ENCODE measurements at regions of chr14 and their contacts with region 1.

Region 1: GRCh38 chr14:21014761-21015190 is 10.1 kb downstream of the NDRG2 start:
- DNase-seq: peak; percentile 92
- ATAC-seq: peak; percentile 91
- H3K4me3 Mint-ChIP-seq: no peak overlapping the region
- H3K27ac Mint-ChIP-seq: no peak overlapping the region
- H3K4me1 Mint-ChIP-seq: peaks cover 12% of the 10 kb centered on the region
- H3K27me3 Mint-ChIP-seq: peaks cover 3% of the 10 kb centered on the region
- CTCF ChIP-seq: peak; percentile 84

Region 2: GRCh38 chr14:20922474-20922873 is 92.3 kb before region 1 on chr14:
- CTCF ChIA-PET with region 1: no interaction called
- POLR2A ChIA-PET with region 1: no interaction called
- DNase-seq: no peak
- ATAC-seq: no peak
- H3K4me3 Mint-ChIP-seq: no peak overlapping the region
- H3K27ac Mint-ChIP-seq: no peak overlapping the region
- H3K4me1 Mint-ChIP-seq: no peaks in the 10 kb centered on the region
- H3K27me3 Mint-ChIP-seq: peaks cover 34% of the 10 kb centered on the region
- CTCF ChIP-seq: no peak

Region 3: DNA sequence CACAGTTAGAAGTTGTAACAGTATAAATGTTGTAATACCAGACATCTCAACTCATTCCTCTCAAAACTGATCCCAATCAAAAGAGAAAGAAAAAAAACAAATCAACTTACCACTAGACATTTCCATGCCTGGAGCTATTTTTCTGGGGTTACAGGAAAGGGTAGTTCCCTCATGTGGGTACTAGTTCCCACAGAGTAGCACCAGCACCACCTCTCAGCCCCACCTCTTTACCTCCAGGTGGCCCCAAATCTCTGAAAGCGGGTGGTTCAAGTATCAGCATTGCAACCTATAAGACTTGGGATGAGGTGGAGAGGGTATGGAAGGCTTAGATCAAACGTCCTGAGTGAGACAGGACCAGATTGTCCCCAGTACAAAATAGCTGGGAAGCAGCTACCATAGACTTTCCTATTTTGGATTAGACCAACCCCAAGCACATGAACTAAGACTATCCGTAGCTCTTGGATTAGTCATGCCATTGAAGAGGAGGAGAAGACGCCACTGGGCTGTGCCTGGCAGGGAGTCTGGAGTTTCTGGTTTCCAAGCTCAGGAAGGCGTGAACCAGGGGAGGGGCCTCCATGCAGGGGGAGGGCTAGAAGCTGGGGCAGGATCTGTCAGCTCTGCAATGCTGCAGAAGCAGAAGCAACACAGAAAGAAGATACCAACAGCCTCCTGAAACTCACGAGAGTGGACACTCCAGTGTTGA is 16.0 kb before region 1 on chr14 and contains the start of gene SLC39A2:
- CTCF ChIA-PET with region 1: interaction called, 78 read pairs
- POLR2A ChIA-PET with region 1: interaction called, 3 read pairs
- DNase-seq: peak; percentile 63
- ATAC-seq: peak; percentile 90
- H3K4me3 Mint-ChIP-seq: peak within 1 kb of the TSS; percentile 32
- H3K27ac Mint-ChIP-seq: peak within 1 kb of the TSS; percentile 55
- H3K4me1 Mint-ChIP-seq: peaks cover 18% of the 10 kb centered on the region
- H3K27me3 Mint-ChIP-seq: no peaks in the 10 kb centered on the region; the same call in 1 of the 2 replicates
- CTCF ChIP-seq: no peak
- total RNA-seq, gene SLC39A2: 0.14 TPM in 1 of 3 replicates, not detected in the others

Region 4: DNA sequence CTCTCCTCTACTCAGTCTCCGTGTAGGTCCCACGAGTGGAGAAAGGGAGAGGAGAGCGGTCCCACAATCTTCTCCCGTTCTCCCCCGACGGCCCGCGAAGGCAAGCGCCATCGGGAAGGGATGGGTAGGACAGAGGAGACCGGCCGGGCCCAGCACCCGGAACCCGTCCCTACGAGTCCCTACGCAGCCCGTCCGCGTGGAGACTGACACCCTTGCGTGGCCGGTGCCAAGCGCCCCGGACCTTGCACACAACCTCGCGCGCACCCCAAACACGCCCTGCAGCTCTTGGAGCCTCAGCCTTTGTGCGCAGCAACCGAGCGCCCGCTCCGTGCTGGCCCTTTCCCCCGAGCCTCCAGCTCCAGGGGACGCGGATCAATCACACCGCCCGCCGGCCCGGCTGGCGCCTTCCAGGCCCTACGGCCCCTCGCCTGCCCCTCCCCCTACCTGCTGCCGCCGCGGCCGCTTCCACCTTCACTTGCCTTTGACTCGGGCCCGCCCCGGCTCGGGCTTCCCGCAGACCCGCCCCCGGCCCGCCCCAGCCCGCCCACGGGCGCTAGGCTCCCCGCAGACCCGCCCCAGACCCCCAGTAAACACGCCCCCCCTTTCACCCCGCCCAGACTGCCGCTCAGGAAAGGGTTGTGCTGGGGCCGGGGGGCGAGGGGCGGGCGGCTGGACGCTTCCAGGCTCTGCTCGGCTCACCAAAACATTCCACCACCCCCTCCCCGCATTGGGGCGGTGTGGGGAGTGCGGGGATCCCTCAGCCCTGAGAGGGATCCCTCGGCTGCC is 10.0 kb after region 1 on chr14 and contains the start of gene NDRG2:
- CTCF ChIA-PET with region 1: interaction called, 104 read pairs
- POLR2A ChIA-PET with region 1: interaction called, 12 read pairs
- DNase-seq: peak; percentile 92
- ATAC-seq: peak; percentile 74
- H3K4me3 Mint-ChIP-seq: peak within 1 kb of the TSS; percentile 93
- H3K27ac Mint-ChIP-seq: peak within 1 kb of the TSS; percentile 99
- H3K4me1 Mint-ChIP-seq: peaks cover 39% of the 10 kb centered on the region
- H3K27me3 Mint-ChIP-seq: peaks cover 35% of the 10 kb centered on the region
- CTCF ChIP-seq: no peak
- total RNA-seq, gene NDRG2: 28.5 to 32.2 TPM (median 30.1 TPM) in 3 replicates

Region 5: DNA sequence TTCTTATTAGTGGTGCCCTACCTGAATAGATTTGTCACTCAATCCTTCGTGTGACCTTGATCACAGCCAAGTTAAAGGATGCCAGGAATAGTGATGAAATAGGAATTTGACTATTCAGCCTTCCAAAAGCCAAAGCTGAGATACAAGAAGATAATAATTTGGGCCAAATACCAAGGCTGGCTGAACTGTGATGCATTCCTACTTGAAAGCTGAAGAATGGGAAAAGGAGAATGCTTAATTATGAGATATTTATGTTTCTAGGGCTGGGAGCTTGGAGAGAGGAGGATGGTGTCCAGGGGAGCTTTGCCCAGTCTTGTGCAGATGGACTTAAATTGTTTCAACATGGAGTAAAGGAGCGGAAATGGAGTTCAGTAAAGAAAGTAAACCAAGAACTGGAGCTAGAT is 32.6 kb after region 1 on chr14:
- CTCF ChIA-PET with region 1: interaction called, 670 read pairs
- POLR2A ChIA-PET with region 1: no interaction called
- DNase-seq: no peak
- ATAC-seq: no peak
- H3K4me3 Mint-ChIP-seq: no peak overlapping the region
- H3K27ac Mint-ChIP-seq: no peak overlapping the region
- H3K4me1 Mint-ChIP-seq: no peaks in the 10 kb centered on the region
- H3K27me3 Mint-ChIP-seq: peaks cover 3% of the 10 kb centered on the region
- CTCF ChIP-seq: no peak

Region 6: GRCh38 chr14:21063479-21063878 is 48.7 kb after region 1 on chr14:
- CTCF ChIA-PET with region 1: interaction called, 86 read pairs
- POLR2A ChIA-PET with region 1: no interaction called
- DNase-seq: no peak
- ATAC-seq: no peak
- H3K4me3 Mint-ChIP-seq: no peak overlapping the region
- H3K27ac Mint-ChIP-seq: no peak overlapping the region
- H3K4me1 Mint-ChIP-seq: peaks cover 13% of the 10 kb centered on the region
- H3K27me3 Mint-ChIP-seq: peaks cover 6% of the 10 kb centered on the region; the same call in 1 of the 2 replicates
- CTCF ChIP-seq: no peak

Region 7: GRCh38 chr14:21092273-21093011 is 77.7 kb after region 1 on chr14:
- CTCF ChIA-PET with region 1: interaction called, 132 read pairs
- POLR2A ChIA-PET with region 1: interaction called, 10 read pairs
- DNase-seq: peak; percentile 94
- ATAC-seq: peak; percentile 27
- H3K4me3 Mint-ChIP-seq: peak overlapping the region; percentile 66
- H3K27ac Mint-ChIP-seq: peak overlapping the region; percentile 94
- H3K4me1 Mint-ChIP-seq: peaks cover 64% of the 10 kb centered on the region
- H3K27me3 Mint-ChIP-seq: no peaks in the 10 kb centered on the region
- CTCF ChIP-seq: peak; percentile 100

Region 8: GRCh38 chr14:21103710-21104447 is 89.1 kb after region 1 on chr14:
- CTCF ChIA-PET with region 1: interaction called, 111 read pairs
- POLR2A ChIA-PET with region 1: no interaction called
- DNase-seq: peak; percentile 96
- ATAC-seq: peak; percentile 79
- H3K4me3 Mint-ChIP-seq: peak overlapping the region; percentile 93
- H3K27ac Mint-ChIP-seq: peak overlapping the region; percentile 87
- H3K4me1 Mint-ChIP-seq: peaks cover 73% of the 10 kb centered on the region
- H3K27me3 Mint-ChIP-seq: no peaks in the 10 kb centered on the region
- CTCF ChIP-seq: peak; percentile 24; the same call in 1 of the 2 replicates

Measured in WTC11 (cell line).